ENCODE measurements at regions of chr6 and their contacts with region 1.

Region 1: DNA sequence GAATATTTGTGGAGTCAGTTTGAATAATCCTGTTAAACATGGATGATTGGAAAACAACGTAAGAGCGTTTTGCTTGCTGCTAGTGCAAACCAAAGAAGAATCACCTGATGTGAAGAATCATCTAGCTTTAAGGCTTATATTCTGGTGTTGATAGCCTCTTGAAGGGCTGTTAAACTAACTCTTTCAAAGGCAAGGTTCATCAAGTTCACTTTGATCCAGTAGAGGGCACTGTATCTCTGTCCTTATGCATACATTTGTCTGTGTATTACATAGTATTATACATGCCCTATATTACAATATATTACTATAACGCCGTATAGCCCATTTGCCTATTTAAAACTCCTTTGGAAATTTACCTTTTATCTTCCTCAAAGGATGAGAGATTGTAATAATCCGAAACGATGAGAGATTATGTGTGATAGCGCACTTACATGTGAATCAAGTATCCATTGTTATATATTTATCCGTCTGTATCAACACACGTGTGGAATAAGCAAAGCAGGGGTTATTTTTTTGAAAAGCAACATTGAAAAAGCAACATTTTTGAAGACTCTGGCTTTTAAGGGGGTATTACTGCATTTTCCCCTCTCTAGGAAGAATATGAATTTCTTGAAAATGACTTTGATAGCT is 50.8 kb upstream of the NRN1 start:
- DNase-seq: peak; percentile 76
- ATAC-seq: peak; percentile 89
- H3K4me3 ChIP-seq: no peak overlapping the region
- H3K27ac ChIP-seq: no peak overlapping the region
- H3K4me1 ChIP-seq: no peaks in the 10 kb centered on the region
- H3K27me3 ChIP-seq: peaks cover 64% of the 10 kb centered on the region
- CTCF ChIP-seq: peak; percentile 83

Region 2: GRCh38 chr6:5422321-5422915 is 635.1 kb before region 1 on chr6:
- CTCF ChIA-PET with region 1: no interaction called
- POLR2A ChIA-PET with region 1: no interaction called
- intact Hi-C with region 1: loop called (anchors 1 kb)
- DNase-seq: peak; percentile 72
- ATAC-seq: peak; percentile 100
- H3K4me3 ChIP-seq: no peak overlapping the region
- H3K27ac ChIP-seq: no peak overlapping the region
- H3K4me1 ChIP-seq: no peaks in the 10 kb centered on the region
- H3K27me3 ChIP-seq: no peaks in the 10 kb centered on the region
- CTCF ChIP-seq: peak; percentile 90

Region 3: GRCh38 chr6:5851261-5851757 is 206.2 kb before region 1 on chr6:
- CTCF ChIA-PET with region 1: no interaction called
- POLR2A ChIA-PET with region 1: no interaction called
- intact Hi-C with region 1: loop called (anchors 10 kb)
- DNase-seq: no peak
- ATAC-seq: no peak
- H3K4me3 ChIP-seq: no peak overlapping the region
- H3K27ac ChIP-seq: no peak overlapping the region
- H3K4me1 ChIP-seq: no peaks in the 10 kb centered on the region
- H3K27me3 ChIP-seq: peaks cover 78% of the 10 kb centered on the region
- CTCF ChIP-seq: no peak

Region 4: DNA sequence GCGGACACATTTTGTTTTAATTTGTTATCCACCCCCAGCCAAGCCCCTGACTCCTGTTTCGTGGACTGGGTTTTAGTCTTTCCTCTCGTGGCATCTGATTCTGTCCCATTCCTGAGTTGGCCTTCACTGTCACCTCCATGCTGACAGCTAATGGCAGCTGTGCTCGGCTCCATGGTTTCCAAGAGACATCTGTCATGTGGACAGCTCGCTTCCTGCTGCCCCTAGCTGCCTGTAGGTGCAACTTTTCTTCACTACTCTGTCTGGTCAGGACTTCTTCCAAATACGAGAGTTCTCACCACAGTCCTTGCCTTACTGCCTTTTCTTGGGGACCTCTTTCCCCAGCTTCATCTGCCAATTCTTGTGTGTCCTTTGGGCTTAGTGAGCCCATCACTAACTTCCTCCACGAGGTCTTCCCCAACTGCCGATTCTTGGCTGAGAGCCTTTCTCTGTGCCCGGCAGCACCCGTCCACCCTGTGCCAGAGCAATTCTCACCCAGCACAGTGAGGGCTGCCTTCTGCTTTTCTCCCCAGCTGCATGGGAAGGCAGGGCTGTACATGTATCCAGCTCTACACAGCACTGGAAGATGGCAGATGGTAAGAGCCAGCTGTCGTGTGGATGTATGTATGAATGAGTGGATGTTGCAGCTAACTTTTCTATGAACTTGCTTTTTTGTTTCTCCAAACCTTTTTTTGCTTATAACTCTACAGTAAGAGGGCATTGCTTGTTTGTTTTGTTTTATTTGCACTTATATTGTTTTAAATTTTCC is 122.5 kb after region 1 on chr6:
- CTCF ChIA-PET with region 1: no interaction called
- POLR2A ChIA-PET with region 1: no interaction called
- intact Hi-C with region 1: no loop called
- DNase-seq: no peak
- ATAC-seq: no peak
- H3K4me3 ChIP-seq: no peak overlapping the region
- H3K27ac ChIP-seq: no peak overlapping the region
- H3K4me1 ChIP-seq: no peaks in the 10 kb centered on the region
- H3K27me3 ChIP-seq: peaks cover 43% of the 10 kb centered on the region
- CTCF ChIP-seq: no peak

Region 5: DNA sequence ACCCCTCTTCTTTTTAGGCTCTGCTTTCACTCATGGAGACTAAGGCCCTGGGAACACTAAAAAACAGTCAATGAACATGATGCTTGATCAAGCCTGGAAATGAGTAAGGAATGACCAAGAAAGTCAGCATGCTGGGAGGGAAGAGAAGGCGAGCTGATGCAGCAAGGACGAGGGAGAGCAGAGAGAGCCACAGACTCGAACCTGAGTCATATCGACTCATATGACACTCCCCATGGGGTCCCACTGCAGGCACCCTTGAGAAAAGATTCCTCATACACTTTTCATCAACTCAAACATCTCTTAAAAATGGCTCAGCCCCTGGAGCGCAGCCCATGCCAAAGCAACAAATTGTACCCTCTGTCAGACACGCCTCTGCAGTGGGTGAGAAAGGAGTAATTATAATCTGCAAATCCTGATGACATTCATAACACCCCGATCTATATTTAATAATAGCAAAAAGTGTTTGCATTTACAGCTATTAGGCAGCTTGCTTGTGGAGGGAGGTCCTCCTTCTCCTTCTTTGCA is 135.7 kb after region 1 on chr6:
- CTCF ChIA-PET with region 1: no interaction called
- POLR2A ChIA-PET with region 1: no interaction called
- intact Hi-C with region 1: no loop called
- DNase-seq: no peak
- ATAC-seq: no peak
- H3K4me3 ChIP-seq: no peak overlapping the region
- H3K27ac ChIP-seq: no peak overlapping the region
- H3K4me1 ChIP-seq: no peaks in the 10 kb centered on the region
- H3K27me3 ChIP-seq: 0 out of 2 replicates have a peak, but pooled peaks cover 5% of the 10 kb centered on the region
- CTCF ChIP-seq: no peak

Region 6: DNA sequence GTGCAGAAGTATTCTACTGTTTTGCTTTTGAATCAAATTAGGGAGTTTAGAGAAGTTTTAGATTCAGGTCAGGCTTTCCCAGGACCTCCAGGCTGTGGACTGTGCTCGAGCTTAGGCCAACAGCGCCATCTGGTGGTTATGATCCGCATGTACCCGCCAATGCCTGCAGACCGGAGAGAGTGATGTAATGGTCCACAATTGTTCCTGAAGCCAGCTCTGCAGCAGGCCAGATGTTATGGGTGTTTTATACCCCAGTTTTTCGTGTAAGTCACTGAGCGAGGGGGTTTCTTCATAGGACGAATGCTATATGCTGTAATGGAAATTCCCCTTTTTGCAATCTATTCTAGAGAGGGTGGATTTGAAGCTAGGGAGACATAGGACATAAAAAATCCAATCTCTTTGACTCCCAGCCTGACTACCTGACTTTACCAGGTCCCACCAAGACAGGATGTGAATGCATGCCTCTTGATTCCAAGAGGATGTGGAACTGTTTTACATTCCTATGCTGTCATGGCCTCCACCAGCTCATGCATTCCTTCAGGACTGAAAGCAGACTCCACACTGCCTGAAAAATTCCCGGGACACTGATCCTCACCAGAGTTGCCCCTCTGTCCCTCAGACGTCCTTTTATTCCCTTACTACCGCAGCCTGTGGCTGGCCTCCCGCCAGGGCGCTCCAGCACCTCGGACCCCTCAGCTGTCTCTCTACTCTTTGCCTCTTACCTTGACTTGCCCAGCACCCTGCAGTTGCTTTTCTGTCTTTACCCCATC is 489.8 kb after region 1 on chr6:
- CTCF ChIA-PET with region 1: no interaction called
- POLR2A ChIA-PET with region 1: no interaction called
- intact Hi-C with region 1: loop called (anchors 1 kb)
- DNase-seq: peak; percentile 90
- ATAC-seq: peak; percentile 98
- H3K4me3 ChIP-seq: peak overlapping the region; percentile 56
- H3K27ac ChIP-seq: no peak overlapping the region
- H3K4me1 ChIP-seq: 0 out of 2 replicates have a peak, but pooled peaks cover 8% of the 10 kb centered on the region
- H3K27me3 ChIP-seq: peaks cover 52% of the 10 kb centered on the region
- CTCF ChIP-seq: peak; percentile 95